CD8-positive, alpha-beta T cell (primary cell): ENCODE measurements at regions of chr20 and their contacts with region 1.

Region 1: DNA sequence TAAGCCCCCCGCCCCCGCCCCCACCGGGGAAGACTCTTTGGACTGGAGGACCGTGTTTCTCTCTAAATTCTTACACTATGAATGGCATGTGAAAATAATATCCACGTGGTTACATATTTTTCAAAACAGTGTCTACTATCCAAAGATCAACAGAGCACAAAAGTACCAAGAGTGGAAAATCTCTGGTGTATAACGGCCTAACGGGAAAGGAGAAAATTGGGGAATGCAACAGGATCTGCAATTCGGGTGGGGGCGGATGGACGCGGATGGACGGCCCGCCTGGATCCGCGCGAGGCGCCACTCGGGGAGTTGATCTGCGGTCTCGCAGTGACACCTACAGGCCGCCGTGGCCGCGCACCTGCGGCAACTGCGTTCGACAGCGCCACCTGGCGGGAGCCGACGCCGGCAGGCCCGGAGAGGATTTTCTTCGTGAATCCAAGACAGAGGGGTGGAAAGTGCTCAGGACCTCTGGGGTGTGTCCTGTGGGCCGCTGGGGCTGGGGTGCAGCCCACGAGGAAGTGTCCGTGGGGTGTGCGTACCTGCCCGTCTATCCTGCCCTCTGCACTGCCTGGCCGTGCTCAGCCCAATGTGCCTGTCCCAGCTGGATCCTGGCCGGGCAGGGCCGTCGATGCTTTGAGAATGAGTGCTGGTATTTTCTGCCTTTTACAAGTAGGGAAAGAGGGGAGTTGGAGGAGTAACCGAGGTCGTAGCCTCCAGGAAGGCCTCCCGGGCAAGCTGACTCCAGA is 18.6 kb downstream of the ANKRD60 start:
- DNase-seq: peak; percentile 78 to 95 (median 87)
- ATAC-seq: peak; percentile 90
- H3K4me3 ChIP-seq: no peak overlapping the region
- H3K4me3 Mint-ChIP-seq: peak overlapping the region; percentile 1
- H3K27ac ChIP-seq: peak overlapping the region in 1 of 2 experiments; percentile 43
- H3K27ac Mint-ChIP-seq: peak overlapping the region; percentile 76
- H3K4me1 ChIP-seq: no peaks in the 10 kb centered on the region
- H3K4me1 Mint-ChIP-seq: peaks cover 3% of the 10 kb centered on the region
- H3K27me3 ChIP-seq: peaks cover 0 to 7% of the 10 kb centered on the region in 2 experiments
- H3K27me3 Mint-ChIP-seq: peaks cover 9% of the 10 kb centered on the region
- CTCF ChIP-seq: peak; percentile 100

Region 2: GRCh38 chr20:56554869-56555268 is 1655.0 kb before region 1 on chr20:
- CTCF ChIA-PET with region 1: no interaction called
- POLR2A ChIA-PET with region 1: no interaction called
- intact Hi-C with region 1: loop called in 1 of 2 experiments (anchors 2 kb)
- DNase-seq: peak in 1 of 9 experiments; percentile 3
- ATAC-seq: no peak
- H3K4me3 ChIP-seq: no peak overlapping the region
- H3K4me3 Mint-ChIP-seq: no peak overlapping the region
- H3K27ac ChIP-seq: no peak overlapping the region
- H3K27ac Mint-ChIP-seq: no peak overlapping the region
- H3K4me1 ChIP-seq: no peaks in the 10 kb centered on the region
- H3K4me1 Mint-ChIP-seq: no peaks in the 10 kb centered on the region
- H3K27me3 ChIP-seq: no peaks in the 10 kb centered on the region
- H3K27me3 Mint-ChIP-seq: peaks cover 2% of the 10 kb centered on the region
- CTCF ChIP-seq: no peak

Region 3: GRCh38 chr20:57498425-57499400 is 711.1 kb before region 1 on chr20:
- CTCF ChIA-PET with region 1: no interaction called
- POLR2A ChIA-PET with region 1: no interaction called
- intact Hi-C with region 1: loop called in 1 of 2 experiments (anchors 5 kb)
- DNase-seq: peak in 5 of 9 experiments; percentile 34 to 61 (median 42)
- ATAC-seq: peak; percentile 74
- H3K4me3 ChIP-seq: no peak overlapping the region
- H3K4me3 Mint-ChIP-seq: no peak overlapping the region
- H3K27ac ChIP-seq: no peak overlapping the region
- H3K27ac Mint-ChIP-seq: no peak overlapping the region
- H3K4me1 ChIP-seq: peaks cover 6% of the 10 kb centered on the region
- H3K4me1 Mint-ChIP-seq: peaks cover 13% of the 10 kb centered on the region
- H3K27me3 ChIP-seq: peaks cover 0 to 4% of the 10 kb centered on the region in 2 experiments
- H3K27me3 Mint-ChIP-seq: peaks cover 32% of the 10 kb centered on the region
- CTCF ChIP-seq: peak; percentile 48

Region 4: GRCh38 chr20:57654363-57654997 is 555.3 kb before region 1 on chr20:
- CTCF ChIA-PET with region 1: interaction called, 3 read pairs
- POLR2A ChIA-PET with region 1: no interaction called
- intact Hi-C with region 1: loop called in 1 of 2 experiments (anchors 1 kb)
- DNase-seq: peak; percentile 32 to 82 (median 62)
- ATAC-seq: peak; percentile 74
- H3K4me3 ChIP-seq: no peak overlapping the region
- H3K4me3 Mint-ChIP-seq: no peak overlapping the region
- H3K27ac ChIP-seq: no peak overlapping the region
- H3K27ac Mint-ChIP-seq: no peak overlapping the region
- H3K4me1 ChIP-seq: peaks cover 39% of the 10 kb centered on the region
- H3K4me1 Mint-ChIP-seq: peaks cover 38% of the 10 kb centered on the region
- H3K27me3 ChIP-seq: no peaks in the 10 kb centered on the region
- H3K27me3 Mint-ChIP-seq: no peaks in the 10 kb centered on the region
- CTCF ChIP-seq: peak; percentile 94

Region 5: GRCh38 chr20:57893366-57893999 is 316.3 kb before region 1 on chr20:
- CTCF ChIA-PET with region 1: no interaction called
- POLR2A ChIA-PET with region 1: no interaction called
- intact Hi-C with region 1: no loop called
- DNase-seq: no peak
- ATAC-seq: no peak
- H3K4me3 ChIP-seq: no peak overlapping the region
- H3K4me3 Mint-ChIP-seq: no peak overlapping the region
- H3K27ac ChIP-seq: no peak overlapping the region
- H3K27ac Mint-ChIP-seq: no peak overlapping the region
- H3K4me1 ChIP-seq: no peaks in the 10 kb centered on the region
- H3K4me1 Mint-ChIP-seq: no peaks in the 10 kb centered on the region
- H3K27me3 ChIP-seq: no peaks in the 10 kb centered on the region
- H3K27me3 Mint-ChIP-seq: peaks cover 18% of the 10 kb centered on the region
- CTCF ChIP-seq: no peak

Region 6: DNA sequence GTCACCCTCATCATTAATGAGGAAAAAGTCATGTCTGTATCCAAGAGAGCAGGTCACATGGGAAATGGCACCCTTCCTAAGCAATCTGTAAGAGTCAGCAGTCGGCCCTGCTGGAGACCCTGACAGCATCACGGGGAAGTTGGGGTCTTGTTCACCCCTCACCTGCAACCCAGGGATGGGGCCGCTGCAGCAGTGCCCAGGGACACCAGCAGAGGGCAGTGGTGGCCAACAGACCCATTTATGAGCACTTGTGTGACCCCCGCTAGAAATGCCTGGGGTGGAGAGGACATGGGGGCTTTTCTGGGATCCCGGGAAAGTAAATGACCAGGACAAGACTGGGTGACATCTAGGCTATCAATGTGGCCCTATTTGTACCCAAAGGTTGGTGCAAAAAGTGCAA is 17.3 kb before region 1 on chr20:
- CTCF ChIA-PET with region 1: interaction called, 36 read pairs
- POLR2A ChIA-PET with region 1: no interaction called
- intact Hi-C with region 1: loop called (anchors 1 to 2 kb)
- DNase-seq: peak in 7 of 9 experiments; percentile 7 to 53 (median 43)
- ATAC-seq: peak; percentile 55
- H3K4me3 ChIP-seq: no peak overlapping the region
- H3K4me3 Mint-ChIP-seq: no peak overlapping the region
- H3K27ac ChIP-seq: no peak overlapping the region
- H3K27ac Mint-ChIP-seq: no peak overlapping the region
- H3K4me1 ChIP-seq: no peaks in the 10 kb centered on the region
- H3K4me1 Mint-ChIP-seq: no peaks in the 10 kb centered on the region
- H3K27me3 ChIP-seq: no peaks in the 10 kb centered on the region
- H3K27me3 Mint-ChIP-seq: peaks cover 16% of the 10 kb centered on the region
- CTCF ChIP-seq: peak; percentile 29